Naive thymus-derived CD4-positive, alpha-beta T cell (primary cell): ENCODE measurements at regions of chr9 and their contacts with region 1.

Region 1: DNA sequence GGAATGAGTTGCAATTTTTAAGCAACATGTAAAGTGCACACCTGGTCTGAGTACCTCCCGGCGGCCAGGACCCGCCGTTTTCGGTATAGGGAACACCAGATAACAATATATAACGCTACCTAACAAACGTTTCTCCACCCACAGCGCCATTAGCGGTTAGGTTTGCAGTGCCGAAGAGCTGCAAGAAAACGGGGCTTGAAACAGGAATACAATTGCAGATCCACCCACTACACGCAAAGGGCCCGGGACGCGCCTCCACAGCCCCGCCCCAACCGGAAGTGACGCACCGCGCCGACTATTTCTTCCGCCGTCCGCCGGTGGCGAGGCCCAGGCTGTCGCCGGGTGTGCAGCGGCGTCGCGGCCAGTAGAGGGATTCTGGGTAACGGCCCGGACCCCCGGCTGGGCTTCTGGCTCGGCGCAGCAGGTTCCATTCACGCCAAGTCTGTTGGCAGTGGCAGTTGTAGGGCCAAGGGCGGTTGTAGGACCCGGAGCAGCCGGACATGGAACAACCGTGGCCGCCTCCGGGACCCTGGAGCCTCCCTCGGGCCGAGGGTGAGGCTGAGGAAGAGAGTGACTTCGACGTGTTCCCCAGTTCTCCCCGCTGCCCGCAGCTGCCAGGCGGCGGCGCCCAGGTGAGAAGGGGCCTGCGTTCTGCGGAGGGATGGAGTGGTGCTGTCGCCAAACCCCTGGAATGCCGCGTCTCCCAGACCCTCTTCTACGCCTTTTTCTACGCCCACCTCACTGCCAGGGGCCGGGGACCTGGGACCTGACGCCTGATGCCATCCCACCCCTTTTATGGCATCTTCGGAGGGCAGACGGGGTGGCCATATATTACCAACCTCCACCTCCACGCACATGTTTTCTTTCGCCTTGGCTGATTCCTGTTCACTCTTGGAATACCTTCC is at the start of gene CDC37L1:
- DNase-seq: peak; percentile 98 to 100 (median 99)
- ATAC-seq: peak; percentile 98
- H3K4me3 ChIP-seq: peak within 1 kb of the TSS; percentile 72
- H3K4me3 Mint-ChIP-seq: no peak within 1 kb of the TSS
- H3K27ac ChIP-seq: peak within 1 kb of the TSS; percentile 95
- H3K27ac Mint-ChIP-seq: no peak within 1 kb of the TSS
- H3K4me1 ChIP-seq: peaks cover 15 to 19% of the 10 kb centered on the region in 2 donors
- H3K4me1 Mint-ChIP-seq: peaks cover 9 to 19% (median 17%) of the 10 kb centered on the region in 7 donors
- H3K27me3 ChIP-seq: no peaks in the 10 kb centered on the region
- H3K27me3 Mint-ChIP-seq: no peaks in the 10 kb centered on the region
- total RNA-seq, gene CDC37L1: 13.4 to 28.0 (median 22.9) TPM

Region 2: DNA sequence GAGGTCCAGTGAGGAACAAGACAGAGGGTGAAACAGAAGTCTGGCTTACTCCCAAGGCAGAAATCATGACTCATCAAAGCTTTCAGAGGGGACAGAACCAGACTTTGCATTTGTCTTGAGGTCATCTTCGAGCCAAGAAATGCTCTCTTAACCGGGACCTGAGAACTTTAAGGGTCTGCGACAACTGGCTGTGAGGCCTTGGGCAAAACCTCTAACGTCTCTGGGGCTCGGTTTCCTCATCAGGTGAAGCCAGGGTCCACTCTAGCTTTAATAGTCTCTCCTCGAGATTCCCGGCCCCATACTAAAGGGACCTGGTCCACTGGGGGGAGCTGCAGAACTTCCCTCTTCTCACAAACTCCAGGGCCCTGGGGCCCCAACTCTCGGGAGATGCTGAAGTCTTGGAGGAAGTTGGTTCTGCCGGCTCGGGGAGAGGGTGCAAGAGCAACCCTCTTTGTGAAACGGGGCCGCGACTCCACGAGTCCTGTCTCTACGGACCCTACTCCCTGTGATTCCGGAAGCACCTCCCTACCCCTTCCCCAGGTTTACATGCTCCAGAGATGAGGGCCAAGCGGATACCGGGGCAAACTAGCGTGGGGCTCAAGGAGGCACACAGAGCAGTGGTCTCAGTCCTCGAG is 382.3 kb before region 1 on chr9:
- CTCF ChIA-PET with region 1: no interaction called
- POLR2A ChIA-PET with region 1: interaction called, 3 read pairs
- intact Hi-C with region 1: loop called in 1 of 2 experiments (anchors 1 kb)
- DNase-seq: peak; percentile 12 to 47 (median 29)
- ATAC-seq: peak; percentile 55
- H3K4me3 ChIP-seq: peak overlapping the region; percentile 74
- H3K4me3 Mint-ChIP-seq: peak overlapping the region; percentile 93 to 98 (median 96)
- H3K27ac ChIP-seq: peak overlapping the region; percentile 68
- H3K27ac Mint-ChIP-seq: peak overlapping the region; percentile 80 to 97 (median 88)
- H3K4me1 ChIP-seq: peaks cover 0 to 4% of the 10 kb centered on the region in 2 donors
- H3K4me1 Mint-ChIP-seq: peaks cover 15 to 34% (median 21%) of the 10 kb centered on the region in 7 donors
- H3K27me3 ChIP-seq: no peaks in the 10 kb centered on the region
- H3K27me3 Mint-ChIP-seq: peaks cover 0 to 67% (median 28%) of the 10 kb centered on the region in 5 donors

Region 3: GRCh38 chr9:4640027-4640426 is 39.5 kb before region 1 on chr9:
- CTCF ChIA-PET with region 1: interaction called, 4 read pairs
- POLR2A ChIA-PET with region 1: interaction called, 7 read pairs
- intact Hi-C with region 1: loop called in 1 of 2 experiments (anchors 1 kb)
- DNase-seq: peak in 7 of 9 donors; percentile 50 to 72 (median 66)
- ATAC-seq: peak; percentile 70
- H3K4me3 ChIP-seq: no peak overlapping the region
- H3K4me3 Mint-ChIP-seq: no peak overlapping the region
- H3K27ac ChIP-seq: no peak overlapping the region
- H3K27ac Mint-ChIP-seq: peak overlapping the region in 4 of 9 donors; percentile 11 to 62 (median 26)
- H3K4me1 ChIP-seq: peaks cover 0 to 3% of the 10 kb centered on the region in 2 donors
- H3K4me1 Mint-ChIP-seq: peaks cover 0 to 21% (median 15%) of the 10 kb centered on the region in 7 donors
- H3K27me3 ChIP-seq: no peaks in the 10 kb centered on the region
- H3K27me3 Mint-ChIP-seq: no peaks in the 10 kb centered on the region

Region 4: GRCh38 chr9:4689687-4690104 is 10.2 kb after region 1 on chr9:
- CTCF ChIA-PET with region 1: no interaction called
- POLR2A ChIA-PET with region 1: interaction called, 10 read pairs
- intact Hi-C with region 1: loop called in 1 of 2 experiments (anchors 1 kb)
- DNase-seq: no peak
- ATAC-seq: no peak
- H3K4me3 ChIP-seq: no peak overlapping the region
- H3K4me3 Mint-ChIP-seq: no peak overlapping the region
- H3K27ac ChIP-seq: no peak overlapping the region
- H3K27ac Mint-ChIP-seq: peak overlapping the region in 7 of 9 donors; percentile 9 to 84 (median 61)
- H3K4me1 ChIP-seq: peaks cover 3 to 4% of the 10 kb centered on the region in 2 donors
- H3K4me1 Mint-ChIP-seq: peaks cover 18 to 74% (median 55%) of the 10 kb centered on the region in 7 donors
- H3K27me3 ChIP-seq: no peaks in the 10 kb centered on the region
- H3K27me3 Mint-ChIP-seq: no peaks in the 10 kb centered on the region

Region 5: DNA sequence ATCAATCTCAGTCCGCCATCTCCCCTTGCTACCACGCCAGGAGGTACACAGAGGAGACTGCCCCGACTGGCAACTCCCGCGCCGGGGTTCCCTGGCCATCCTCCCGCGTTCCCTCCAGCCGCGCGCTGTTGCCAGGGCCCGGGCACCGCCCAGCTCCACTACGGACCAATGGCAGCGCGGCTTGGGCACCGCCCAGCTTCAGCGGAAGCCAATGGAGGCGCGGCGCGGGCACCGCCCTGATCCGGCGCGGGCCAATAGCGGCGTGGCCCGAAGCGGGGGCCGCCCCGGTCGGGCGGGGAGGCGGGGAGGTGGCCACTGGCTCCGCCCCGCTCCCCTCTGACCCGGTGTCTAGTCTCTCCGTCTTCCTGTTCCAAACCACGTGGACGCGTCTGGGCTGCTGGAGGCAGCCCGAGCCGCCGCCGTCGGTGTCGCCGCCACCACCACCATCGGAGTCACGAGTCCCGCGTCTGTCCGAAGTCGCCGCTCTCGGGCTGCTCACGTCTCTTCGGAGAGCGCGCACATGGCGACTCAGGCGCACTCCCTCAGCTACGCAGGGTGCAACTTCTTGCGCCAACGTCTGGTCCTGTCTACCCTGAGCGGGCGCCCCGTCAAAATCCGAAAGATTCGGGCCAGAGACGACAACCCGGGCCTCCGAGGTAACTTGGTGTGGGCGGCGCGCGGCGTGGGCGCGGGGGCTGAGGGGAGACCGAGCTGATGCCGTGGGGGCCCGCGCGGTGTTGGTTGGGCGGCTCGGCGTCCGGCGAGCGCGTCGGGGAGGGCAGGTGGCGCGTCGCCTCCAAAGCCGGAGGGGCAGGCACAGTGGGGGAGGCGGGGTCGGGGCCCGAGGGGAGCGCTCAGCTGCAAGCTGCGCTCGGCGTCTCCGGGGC is 113.3 kb after region 1 on chr9 and contains the start of gene RCL1:
- CTCF ChIA-PET with region 1: no interaction called
- POLR2A ChIA-PET with region 1: interaction called, 7 read pairs
- intact Hi-C with region 1: loop called (anchors 1 kb)
- DNase-seq: peak; percentile 93 to 98 (median 97)
- ATAC-seq: peak; percentile 96
- H3K4me3 ChIP-seq: peak within 1 kb of the TSS; percentile 99
- H3K4me3 Mint-ChIP-seq: peak within 1 kb of the TSS; percentile 83 to 97 (median 94)
- H3K27ac ChIP-seq: peak within 1 kb of the TSS; percentile 80
- H3K27ac Mint-ChIP-seq: peak within 1 kb of the TSS; percentile 71 to 97 (median 94)
- H3K4me1 ChIP-seq: peaks cover 4 to 18% of the 10 kb centered on the region in 2 donors
- H3K4me1 Mint-ChIP-seq: peaks cover 21 to 56% (median 45%) of the 10 kb centered on the region in 7 donors
- H3K27me3 ChIP-seq: no peaks in the 10 kb centered on the region
- H3K27me3 Mint-ChIP-seq: peaks cover 0 to 11% (median 0%) of the 10 kb centered on the region in 5 donors
- total RNA-seq, gene RCL1: 21.5 to 39.4 (median 23.4) TPM

Region 6: GRCh38 chr9:4822057-4822456 is 142.5 kb after region 1 on chr9:
- CTCF ChIA-PET with region 1: no interaction called
- POLR2A ChIA-PET with region 1: no interaction called
- intact Hi-C with region 1: no loop called
- DNase-seq: no peak
- ATAC-seq: no peak
- H3K4me3 ChIP-seq: no peak overlapping the region
- H3K4me3 Mint-ChIP-seq: peak overlapping the region in 2 of 10 donors; percentile 23 to 34
- H3K27ac ChIP-seq: no peak overlapping the region
- H3K27ac Mint-ChIP-seq: peak overlapping the region in 3 of 9 donors; percentile 25 to 45 (median 43)
- H3K4me1 ChIP-seq: no peaks in the 10 kb centered on the region
- H3K4me1 Mint-ChIP-seq: peaks cover 17 to 51% (median 30%) of the 10 kb centered on the region in 7 donors
- H3K27me3 ChIP-seq: no peaks in the 10 kb centered on the region
- H3K27me3 Mint-ChIP-seq: no peaks in the 10 kb centered on the region

Region 7: GRCh38 chr9:5450359-5451091 is 771.0 kb after region 1 on chr9 and contains the start of gene CD274:
- CTCF ChIA-PET with region 1: no interaction called
- POLR2A ChIA-PET with region 1: no interaction called
- intact Hi-C with region 1: loop called in 1 of 2 experiments (anchors 5 kb)
- DNase-seq: peak; percentile 61 to 89 (median 80)
- ATAC-seq: peak; percentile 95
- H3K4me3 ChIP-seq: peak within 1 kb of the TSS; percentile 78
- H3K4me3 Mint-ChIP-seq: peak within 1 kb of the TSS; percentile 92 to 98 (median 95)
- H3K27ac ChIP-seq: peak within 1 kb of the TSS; percentile 94
- H3K27ac Mint-ChIP-seq: peak within 1 kb of the TSS; percentile 97 to 99 (median 98)
- H3K4me1 ChIP-seq: peaks cover 0 to 11% of the 10 kb centered on the region in 2 donors
- H3K4me1 Mint-ChIP-seq: peaks cover 33 to 69% (median 62%) of the 10 kb centered on the region in 7 donors
- H3K27me3 ChIP-seq: no peaks in the 10 kb centered on the region
- H3K27me3 Mint-ChIP-seq: no peaks in the 10 kb centered on the region
- total RNA-seq, gene CD274: 2.9 to 38.7 (median 7.8) TPM